Tibial artery (tissue), 4 donors: ENCODE measurements at regions of chr11 and their contacts with region 1.

Region 1: DNA sequence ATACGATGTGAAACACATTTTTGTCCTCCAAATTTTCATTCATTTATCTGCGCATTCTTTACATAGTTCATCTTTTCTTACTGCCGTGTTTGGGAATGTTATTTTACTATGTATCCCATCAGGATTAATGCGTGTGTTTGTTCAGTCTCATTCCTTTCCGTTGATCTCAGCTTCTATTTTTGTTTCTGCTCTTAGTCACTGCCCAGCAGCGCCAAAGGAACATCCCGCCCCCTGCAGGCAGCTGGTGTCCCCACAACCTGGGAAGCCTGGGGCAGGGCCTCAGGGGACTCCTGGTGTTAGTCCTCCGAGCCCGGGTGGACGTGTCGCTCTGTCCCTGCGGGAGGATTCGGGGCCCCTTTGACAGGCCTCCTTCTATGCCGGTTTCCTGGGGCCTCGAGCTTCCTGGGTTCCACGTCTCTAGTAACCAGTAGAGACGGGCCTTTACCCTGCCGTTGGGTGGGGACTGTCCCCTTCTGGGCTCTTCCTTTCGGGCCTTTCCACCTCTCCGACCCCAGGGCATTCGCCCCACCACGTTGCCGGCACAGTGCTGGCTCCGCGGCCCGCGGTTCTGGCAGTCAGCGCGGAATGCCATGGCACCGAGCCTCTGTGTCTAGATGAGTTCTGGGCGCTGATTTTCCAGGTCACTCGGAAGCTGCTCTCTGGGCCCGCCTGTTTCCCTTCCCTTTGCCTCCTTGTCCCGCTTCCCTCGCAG is 39.8 kb downstream of the WEE1 start:
- DNase-seq: peak; percentile 93 to 97
- H3K4me3 ChIP-seq: peak overlapping the region; percentile 50 to 55
- H3K27ac ChIP-seq: peak overlapping the region; percentile 88 to 93
- H3K4me1 ChIP-seq: peaks cover 0 to 35% (median 19%) of the 10 kb centered on the region in 4 donors
- H3K27me3 ChIP-seq: no peaks in the 10 kb centered on the region
- CTCF ChIP-seq: peak; percentile 91 to 92

Region 2: DNA sequence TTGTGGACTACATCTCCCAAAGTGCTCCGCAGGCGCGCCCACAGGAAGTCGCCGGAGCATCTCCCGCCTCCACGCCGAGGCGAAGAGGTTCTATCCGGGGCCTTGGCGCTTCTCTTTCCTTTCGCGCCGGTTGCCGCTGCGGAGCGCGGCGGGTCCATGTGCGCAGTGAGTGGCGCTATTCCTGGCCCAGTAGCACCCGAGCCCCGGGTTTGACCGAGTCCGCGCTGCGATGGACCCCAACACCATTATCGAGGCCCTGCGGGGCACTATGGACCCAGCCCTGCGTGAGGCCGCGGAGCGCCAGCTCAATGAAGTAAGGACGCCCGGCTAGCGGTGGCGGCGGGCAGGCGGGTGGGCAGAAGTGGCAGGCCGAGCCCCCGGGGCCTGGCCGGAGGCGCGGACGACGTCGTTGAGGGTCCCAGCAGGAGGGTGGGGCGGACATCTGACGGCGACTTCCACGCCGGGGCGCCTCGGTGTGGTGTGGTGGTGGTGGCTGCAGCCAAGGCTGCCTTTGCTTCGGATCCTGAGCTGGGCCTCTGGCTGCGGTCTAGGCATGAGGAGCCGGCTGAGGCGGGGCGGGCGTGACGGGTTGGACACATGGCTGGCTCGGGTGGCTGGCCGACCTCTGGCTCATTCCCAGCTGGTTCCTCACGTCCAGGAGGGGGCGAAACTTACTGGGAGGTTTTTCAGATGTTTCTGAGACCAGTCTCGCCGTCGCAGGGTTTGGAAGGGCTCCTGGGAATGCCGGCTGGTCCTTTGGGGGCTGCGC is 228.6 kb before region 1 on chr11 and contains the start of gene IPO7:
- intact Hi-C with region 1: no loop called
- DNase-seq: peak; percentile 89 to 93
- H3K4me3 ChIP-seq: peak within 1 kb of the TSS; percentile 84 to 90
- H3K27ac ChIP-seq: peak within 1 kb of the TSS; percentile 86 to 95
- H3K4me1 ChIP-seq: peaks cover 0 to 61% (median 27%) of the 10 kb centered on the region in 4 donors
- H3K27me3 ChIP-seq: no peaks in the 10 kb centered on the region
- CTCF ChIP-seq: no peak

Region 3: DNA sequence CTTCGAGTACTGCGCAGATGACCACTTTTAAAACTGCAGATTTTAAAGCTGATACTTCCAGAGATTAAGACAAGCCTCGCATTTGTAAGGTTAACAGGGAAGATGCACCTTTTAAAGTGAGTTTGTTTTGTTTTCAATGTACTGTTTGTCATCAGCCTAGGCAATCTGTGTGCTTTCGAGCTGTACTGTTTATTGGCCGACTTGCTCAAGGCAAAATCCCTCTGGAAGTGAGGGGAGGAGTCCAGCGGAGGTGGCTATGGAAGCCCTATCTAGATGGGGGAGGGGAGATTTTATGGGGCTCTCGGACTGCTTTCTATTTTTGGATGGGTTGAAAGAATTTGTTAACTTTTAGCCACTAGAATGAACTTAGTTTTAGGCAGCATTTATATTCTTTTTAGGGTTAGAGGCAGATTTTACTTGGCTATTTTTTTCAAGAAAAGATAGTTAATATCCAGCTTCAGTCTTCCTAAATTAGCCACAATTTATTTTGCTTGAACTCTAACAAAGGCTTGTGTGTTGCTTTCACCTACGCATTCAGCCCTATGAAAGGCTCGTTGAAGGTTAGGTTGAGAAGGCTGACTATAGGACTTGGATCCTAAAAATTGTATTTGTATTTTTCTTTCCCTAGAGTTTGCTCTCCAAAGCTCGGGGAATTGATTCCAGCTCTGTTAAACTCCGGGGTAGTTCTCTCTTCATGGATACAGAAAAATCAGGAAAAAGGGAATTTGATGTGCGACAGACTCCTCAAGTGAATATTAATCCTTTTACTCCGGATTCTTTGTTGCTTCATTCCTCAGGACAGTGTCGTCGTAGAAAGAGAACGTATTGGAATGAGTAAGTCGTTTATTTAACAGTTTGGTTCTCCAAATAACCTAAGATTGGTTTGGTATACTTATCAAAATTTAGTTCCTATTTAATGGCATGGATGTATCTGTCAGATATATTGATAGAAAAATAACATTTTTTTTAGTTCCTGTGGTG is 37.7 kb before region 1 on chr11:
- intact Hi-C with region 1: loop called (anchors 5 kb)
- DNase-seq: peak; percentile 71 to 85
- H3K4me3 ChIP-seq: peak overlapping the region; percentile 81 to 89
- H3K27ac ChIP-seq: peak overlapping the region; percentile 96 to 98
- H3K4me1 ChIP-seq: peaks cover 0 to 30% (median 9%) of the 10 kb centered on the region in 4 donors
- H3K27me3 ChIP-seq: no peaks in the 10 kb centered on the region
- CTCF ChIP-seq: no peak

Region 4: GRCh38 chr11:9663699-9664275 is 50.5 kb after region 1 on chr11 and contains the start of gene SWAP70:
- intact Hi-C with region 1: loop called (anchors 5 kb)
- DNase-seq: peak; percentile 87 to 95
- H3K4me3 ChIP-seq: peak within 1 kb of the TSS; percentile 87 to 96
- H3K27ac ChIP-seq: peak within 1 kb of the TSS; percentile 98
- H3K4me1 ChIP-seq: peaks cover 0 to 26% (median 14%) of the 10 kb centered on the region in 4 donors
- H3K27me3 ChIP-seq: no peaks in the 10 kb centered on the region
- CTCF ChIP-seq: peak; percentile 58 to 81

Region 5: GRCh38 chr11:9745411-9746237 is 132.3 kb after region 1 on chr11:
- intact Hi-C with region 1: loop called (anchors 2 kb)
- DNase-seq: no peak
- H3K4me3 ChIP-seq: no peak overlapping the region
- H3K27ac ChIP-seq: no peak overlapping the region
- H3K4me1 ChIP-seq: peaks cover 0 to 21% (median 9%) of the 10 kb centered on the region in 4 donors
- H3K27me3 ChIP-seq: no peaks in the 10 kb centered on the region
- CTCF ChIP-seq: no peak